ENCODE measurements at regions of chr2 and their contacts with region 1.

Region 1: GRCh38 chr2:88669371-88670214 is 21.9 kb upstream of the RPIA start:
- DNase-seq: no peak
- ATAC-seq: peak in 1 of 2 donors; percentile 61
- H3K4me3 ChIP-seq: no peak overlapping the region
- H3K27ac ChIP-seq: no peak overlapping the region
- H3K4me1 ChIP-seq: no peaks in the 10 kb centered on the region
- H3K27me3 ChIP-seq: no peaks in the 10 kb centered on the region
- CTCF ChIP-seq: peak; percentile 53

Region 2: GRCh38 chr2:88590998-88591613 is 78.5 kb before region 1 on chr2:
- intact Hi-C with region 1: loop called (anchors 10 kb)
- DNase-seq: no peak
- ATAC-seq: peak; percentile 80 to 81
- H3K4me3 ChIP-seq: no peak overlapping the region
- H3K27ac ChIP-seq: no peak overlapping the region
- H3K4me1 ChIP-seq: no peaks in the 10 kb centered on the region
- H3K27me3 ChIP-seq: no peaks in the 10 kb centered on the region
- CTCF ChIP-seq: peak; percentile 73

Region 3: DNA sequence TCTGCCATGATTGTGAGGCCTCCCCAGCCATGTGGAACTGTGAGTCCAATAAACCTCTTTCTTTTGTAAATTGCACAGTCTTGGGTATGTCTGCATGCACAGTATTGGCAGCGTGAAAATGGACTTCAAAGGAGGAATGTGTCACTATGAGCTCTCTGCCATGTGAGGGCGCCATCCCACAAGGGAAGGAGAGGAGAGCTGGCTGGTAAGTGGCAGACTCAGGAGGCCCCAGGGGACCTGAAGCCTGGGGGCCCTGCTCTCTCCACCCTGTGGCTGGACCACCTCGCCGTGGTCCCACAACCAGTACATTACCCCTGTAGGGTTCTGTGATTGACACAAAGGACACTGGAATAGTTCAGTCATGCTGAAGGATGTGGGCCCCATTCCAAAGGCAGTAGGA is 144.0 kb after region 1 on chr2:
- intact Hi-C with region 1: no loop called
- DNase-seq: no peak
- ATAC-seq: no peak
- H3K4me3 ChIP-seq: no peak overlapping the region
- H3K27ac ChIP-seq: no peak overlapping the region
- H3K4me1 ChIP-seq: no peaks in the 10 kb centered on the region
- H3K27me3 ChIP-seq: no peaks in the 10 kb centered on the region
- CTCF ChIP-seq: peak; percentile 8